GM10248 (cell line): ENCODE measurements at regions of chr7 and their contacts with region 1.

Region 1: GRCh38 chr7:109336531-109336930 is 766.9 kb downstream of the DNAJB9 start:
- DNase-seq: no peak
- CTCF ChIP-seq: no peak

Region 2: GRCh38 chr7:109296082-109296481 is 40.4 kb before region 1 on chr7:
- CTCF ChIA-PET with region 1: no interaction called
- POLR2A ChIA-PET with region 1: no interaction called
- DNase-seq: no peak
- CTCF ChIP-seq: no peak

Region 3: GRCh38 chr7:109322833-109323232 is 13.7 kb before region 1 on chr7:
- CTCF ChIA-PET with region 1: interaction called, 11 read pairs
- POLR2A ChIA-PET with region 1: no interaction called
- DNase-seq: no peak
- CTCF ChIP-seq: no peak

Region 4: DNA sequence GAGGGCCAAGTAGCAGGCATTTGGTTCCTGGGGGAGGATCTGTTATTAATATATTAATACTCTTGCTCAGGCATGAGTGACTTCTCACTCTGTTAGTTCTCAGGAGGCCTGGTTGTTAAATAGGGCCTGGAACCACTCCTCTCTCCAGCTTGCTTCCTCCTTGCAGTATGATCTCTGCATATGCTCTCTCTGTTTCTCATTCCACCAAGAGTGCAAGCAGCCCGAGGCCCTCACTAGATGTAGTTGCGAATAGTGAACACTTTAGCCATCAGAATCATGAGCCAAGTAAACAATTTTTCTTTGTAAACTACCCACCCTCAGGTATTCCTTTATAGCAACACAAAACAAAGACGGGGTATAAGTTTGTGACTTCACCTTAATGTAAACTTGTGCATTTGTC is 17.5 kb after region 1 on chr7:
- CTCF ChIA-PET with region 1: no interaction called
- POLR2A ChIA-PET with region 1: no interaction called
- DNase-seq: no peak
- CTCF ChIP-seq: no peak

Region 5: GRCh38 chr7:109582211-109582610 is 245.7 kb after region 1 on chr7:
- CTCF ChIA-PET with region 1: no interaction called
- POLR2A ChIA-PET with region 1: no interaction called
- DNase-seq: no peak
- CTCF ChIP-seq: no peak